Activated T-helper 2 cell treated with anti-CD3 and anti-CD28 coated beads, Interferon-gamma antibody, Interleukin-2, Interleukin-4, amounts not matched to agents 10 μg/mL and 5 μg/mL and 100 μg/mL, durations not matched to agents 14 hours and 24 hours and 36 hours (primary cell): ENCODE measurements at regions of chr3 and their contacts with region 1.

Region 1: DNA sequence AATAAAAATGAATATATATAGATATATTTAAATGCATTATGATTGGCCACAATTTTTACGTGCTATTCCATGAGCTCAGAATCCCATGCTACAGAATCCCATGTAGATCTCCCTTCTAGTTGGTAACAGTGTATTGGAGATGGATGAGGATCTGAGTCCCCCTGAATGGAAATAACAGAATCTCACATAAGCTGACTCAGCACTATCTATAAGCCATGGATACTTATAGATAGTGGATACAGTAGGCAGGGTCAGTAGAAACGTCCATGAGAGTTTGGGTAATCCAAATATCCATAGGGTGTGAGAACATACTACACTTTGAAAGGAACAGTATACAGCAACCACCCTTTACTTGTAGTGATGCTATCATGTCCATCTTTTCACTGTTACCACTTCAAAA is 375.4 kb downstream of the EPHA6 start:
- DNase-seq: no peak
- H3K4me3 Mint-ChIP-seq: no peak overlapping the region
- H3K27ac Mint-ChIP-seq: no peak overlapping the region
- H3K4me1 Mint-ChIP-seq: no peaks in the 10 kb centered on the region
- H3K27me3 Mint-ChIP-seq: no peaks in the 10 kb centered on the region

Region 2: DNA sequence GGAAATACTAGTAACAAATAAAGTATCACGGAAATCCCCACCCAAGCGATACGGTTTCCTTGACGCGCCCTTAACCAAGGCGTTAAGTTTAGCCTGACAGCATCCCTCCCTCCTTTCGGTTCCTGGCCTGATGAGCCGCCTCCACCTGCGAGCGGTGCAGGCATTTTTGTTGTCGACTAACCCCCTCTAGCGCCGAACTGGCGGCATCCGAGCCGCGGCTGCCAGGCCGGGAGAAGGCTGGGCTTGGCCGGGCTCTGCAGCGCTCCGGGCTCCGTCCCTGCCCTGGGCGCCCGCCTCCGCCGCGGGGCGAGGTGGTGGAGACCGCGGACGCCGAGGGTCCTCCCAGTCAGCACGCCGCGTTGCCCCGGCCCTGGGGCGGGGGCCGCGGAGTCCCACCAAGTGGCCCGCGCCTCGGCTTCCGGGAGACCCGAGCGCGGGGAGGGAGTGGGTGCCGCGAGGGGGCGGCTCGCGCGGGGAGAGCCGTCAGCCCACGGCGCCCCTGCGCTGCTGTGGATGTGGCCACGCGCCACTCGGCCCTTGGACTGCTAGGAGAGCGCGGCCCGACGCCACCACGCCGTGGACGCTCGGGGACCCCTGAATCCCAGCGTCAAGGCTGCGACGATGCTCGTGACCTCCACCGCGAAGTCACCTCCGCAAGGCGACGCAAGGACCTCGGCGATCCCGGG is 376.6 kb before region 1 on chr3:
- intact Hi-C with region 1: no loop called
- DNase-seq: peak; percentile 64
- H3K4me3 Mint-ChIP-seq: peak overlapping the region; percentile 69
- H3K27ac Mint-ChIP-seq: no peak overlapping the region
- H3K4me1 Mint-ChIP-seq: peaks cover 10% of the 10 kb centered on the region
- H3K27me3 Mint-ChIP-seq: peaks cover 24% of the 10 kb centered on the region

Region 3: GRCh38 chr3:97252232-97252756 is 62.5 kb after region 1 on chr3:
- intact Hi-C with region 1: loop called (anchors 2 kb)
- DNase-seq: no peak
- H3K4me3 Mint-ChIP-seq: no peak overlapping the region
- H3K27ac Mint-ChIP-seq: no peak overlapping the region
- H3K4me1 Mint-ChIP-seq: no peaks in the 10 kb centered on the region
- H3K27me3 Mint-ChIP-seq: no peaks in the 10 kb centered on the region